ENCODE measurements at regions of chr18 and their contacts with region 1.

Region 1: DNA sequence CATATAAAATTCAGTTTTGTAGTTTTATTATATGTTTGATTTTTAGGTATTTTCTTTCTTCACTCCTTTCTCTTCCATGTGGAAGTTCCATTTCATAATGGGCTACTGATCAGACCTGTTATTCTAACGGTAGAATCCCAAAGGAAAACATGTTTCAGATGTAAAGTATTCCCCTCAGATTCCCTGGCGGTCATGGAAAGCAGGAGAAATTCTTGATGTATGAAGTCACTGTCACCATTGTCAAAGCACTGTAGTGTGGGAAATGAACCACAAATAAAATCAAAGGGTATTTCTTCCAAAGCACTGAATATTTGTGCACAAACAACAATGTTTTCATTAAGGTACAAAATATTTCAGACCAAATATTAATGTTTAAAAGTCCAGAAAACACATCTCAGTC is 237.3 kb upstream of the KLHL14 start:
- DNase-seq: peak; percentile 88
- H3K4me3 ChIP-seq: no peak overlapping the region
- H3K27ac ChIP-seq: peak overlapping the region; percentile 30
- H3K4me1 ChIP-seq: peaks cover 37% of the 10 kb centered on the region
- H3K27me3 ChIP-seq: no peaks in the 10 kb centered on the region
- CTCF ChIP-seq: no peak
- POLR2A ChIP-seq: no peak

Region 2: GRCh38 chr18:32919799-32920198 is 90.3 kb before region 1 on chr18:
- CTCF ChIA-PET with region 1: no interaction called
- POLR2A ChIA-PET with region 1: no interaction called
- dilution Hi-C with region 1: no loop called
- intact Hi-C with region 1: loop called (anchors 5 kb)
- DNase-seq: no peak
- H3K4me3 ChIP-seq: no peak overlapping the region
- H3K27ac ChIP-seq: no peak overlapping the region
- H3K4me1 ChIP-seq: peaks cover 13% of the 10 kb centered on the region
- H3K27me3 ChIP-seq: peaks cover 0 to 2% of the 10 kb centered on the region in 2 experiments
- CTCF ChIP-seq: peak in 1 of 2 donors; percentile 27
- POLR2A ChIP-seq: no peak

Region 3: GRCh38 chr18:32958746-32959145 is 51.4 kb before region 1 on chr18:
- CTCF ChIA-PET with region 1: no interaction called
- POLR2A ChIA-PET with region 1: no interaction called
- dilution Hi-C with region 1: no loop called
- intact Hi-C with region 1: no loop called
- DNase-seq: no peak
- H3K4me3 ChIP-seq: no peak overlapping the region
- H3K27ac ChIP-seq: no peak overlapping the region
- H3K4me1 ChIP-seq: no peaks in the 10 kb centered on the region
- H3K27me3 ChIP-seq: no peaks in the 10 kb centered on the region
- CTCF ChIP-seq: no peak
- POLR2A ChIP-seq: no peak

Region 4: GRCh38 chr18:33034945-33035344 is 24.8 kb after region 1 on chr18:
- CTCF ChIA-PET with region 1: no interaction called
- POLR2A ChIA-PET with region 1: no interaction called
- dilution Hi-C with region 1: no loop called
- intact Hi-C with region 1: loop called (anchors 2 kb)
- DNase-seq: peak; percentile 93
- H3K4me3 ChIP-seq: no peak overlapping the region
- H3K27ac ChIP-seq: peak overlapping the region; percentile 72
- H3K4me1 ChIP-seq: peaks cover 22% of the 10 kb centered on the region
- H3K27me3 ChIP-seq: no peaks in the 10 kb centered on the region
- CTCF ChIP-seq: no peak
- POLR2A ChIP-seq: no peak

Region 5: GRCh38 chr18:33135951-33136660 is 126.0 kb after region 1 on chr18:
- CTCF ChIA-PET with region 1: no interaction called
- POLR2A ChIA-PET with region 1: no interaction called
- dilution Hi-C with region 1: no loop called
- intact Hi-C with region 1: loop called (anchors 5 kb)
- DNase-seq: peak; percentile 93
- H3K4me3 ChIP-seq: peak overlapping the region in 1 of 3 experiments; percentile 19
- H3K27ac ChIP-seq: peak overlapping the region; percentile 84
- H3K4me1 ChIP-seq: peaks cover 21% of the 10 kb centered on the region
- H3K27me3 ChIP-seq: no peaks in the 10 kb centered on the region
- CTCF ChIP-seq: no peak
- POLR2A ChIP-seq: peak; percentile 38

Region 6: DNA sequence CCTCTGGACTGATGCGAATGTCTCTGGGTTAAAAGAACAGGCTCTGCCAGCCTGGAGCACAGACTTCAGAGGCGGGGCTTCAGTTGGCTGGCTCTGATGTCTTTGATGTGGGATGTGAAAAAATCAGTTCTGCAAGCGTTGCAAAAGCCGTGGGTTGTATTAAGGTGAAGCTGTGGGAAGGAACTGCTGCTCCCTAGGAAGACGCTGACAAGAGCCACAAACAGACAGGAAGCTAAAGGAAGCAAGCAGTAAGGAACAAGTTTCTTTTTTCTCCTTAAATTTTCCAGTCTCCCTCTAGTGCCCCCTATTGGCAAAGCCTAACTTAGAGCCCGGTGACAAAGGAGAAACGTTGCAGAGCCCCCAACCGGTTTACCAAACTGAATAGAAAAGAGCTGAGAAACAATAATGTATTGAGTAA is 191.4 kb after region 1 on chr18:
- CTCF ChIA-PET with region 1: no interaction called
- POLR2A ChIA-PET with region 1: no interaction called
- dilution Hi-C with region 1: no loop called
- intact Hi-C with region 1: loop called (anchors 5 kb)
- DNase-seq: peak; percentile 75
- H3K4me3 ChIP-seq: peak overlapping the region in 2 of 3 experiments; percentile 10 to 12
- H3K27ac ChIP-seq: no peak overlapping the region
- H3K4me1 ChIP-seq: peaks cover 2% of the 10 kb centered on the region
- H3K27me3 ChIP-seq: no peaks in the 10 kb centered on the region
- CTCF ChIP-seq: peak; percentile 65 to 77
- POLR2A ChIP-seq: no peak

Region 7: DNA sequence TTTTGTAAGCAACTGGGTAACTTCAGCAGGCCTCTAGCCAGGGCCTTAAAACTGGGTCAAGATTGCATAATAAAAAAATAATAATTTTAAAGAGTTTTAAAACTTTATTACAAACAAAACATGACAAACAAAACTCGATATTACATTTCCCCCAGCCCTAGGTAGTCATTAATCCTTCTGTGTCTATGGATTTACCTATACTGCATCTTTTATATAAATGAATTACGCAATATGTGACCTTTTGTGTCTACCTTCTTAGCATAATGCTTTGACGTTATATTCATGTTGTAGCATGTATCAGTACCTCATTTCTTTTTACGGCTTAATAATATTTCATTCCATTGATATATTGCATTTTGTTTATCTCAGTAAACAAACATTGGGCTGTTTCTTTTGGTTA is 316.8 kb after region 1 on chr18:
- CTCF ChIA-PET with region 1: no interaction called
- POLR2A ChIA-PET with region 1: no interaction called
- dilution Hi-C with region 1: no loop called
- intact Hi-C with region 1: no loop called
- DNase-seq: no peak
- H3K4me3 ChIP-seq: no peak overlapping the region
- H3K27ac ChIP-seq: no peak overlapping the region
- H3K4me1 ChIP-seq: no peaks in the 10 kb centered on the region
- H3K27me3 ChIP-seq: no peaks in the 10 kb centered on the region
- CTCF ChIP-seq: no peak
- POLR2A ChIP-seq: no peak

Measured in endothelial cell of umbilical vein (primary cell).